ENCODE measurements at regions of chr4 and their contacts with region 1.

Region 1: GRCh38 chr4:102815981-102816380 is 11.4 kb downstream of the UBE2D3 start:
- DNase-seq: no peak
- H3K4me3 ChIP-seq: no peak overlapping the region
- H3K27ac ChIP-seq: no peak overlapping the region
- H3K4me1 ChIP-seq: peaks cover 76 to 100% (median 100%) of the 10 kb centered on the region in 6 donors
- H3K27me3 ChIP-seq: no peaks in the 10 kb centered on the region
- CTCF ChIP-seq: no peak
- POLR2A ChIP-seq: no peak

Region 2: DNA sequence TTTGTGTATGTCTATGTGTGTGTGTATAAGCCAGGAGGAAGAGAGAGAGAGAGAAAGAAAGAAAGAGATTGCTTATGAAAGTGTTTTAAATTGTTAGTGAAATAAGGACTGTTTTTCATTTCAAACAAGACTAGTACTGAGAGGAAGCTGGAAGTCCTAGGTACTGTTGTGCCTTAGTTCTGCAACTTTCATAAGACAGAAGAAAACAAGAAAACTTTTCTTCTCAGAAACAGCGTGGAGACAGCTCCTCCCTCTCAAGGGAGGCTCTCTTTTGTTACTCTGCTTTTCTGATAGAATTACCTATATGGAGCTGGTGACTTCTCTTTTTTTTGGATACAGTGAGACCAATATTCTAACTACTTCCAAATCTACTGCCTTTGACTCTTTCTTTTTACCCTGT is 963.0 kb before region 1 on chr4:
- intact Hi-C with region 1: no loop called
- DNase-seq: no peak
- H3K4me3 ChIP-seq: no peak overlapping the region
- H3K27ac ChIP-seq: peak overlapping the region in 6 of 8 donors; percentile 8 to 77 (median 46)
- H3K4me1 ChIP-seq: peaks cover 5 to 81% (median 14%) of the 10 kb centered on the region in 6 donors
- H3K27me3 ChIP-seq: no peaks in the 10 kb centered on the region
- CTCF ChIP-seq: no peak
- POLR2A ChIP-seq: no peak

Region 3: DNA sequence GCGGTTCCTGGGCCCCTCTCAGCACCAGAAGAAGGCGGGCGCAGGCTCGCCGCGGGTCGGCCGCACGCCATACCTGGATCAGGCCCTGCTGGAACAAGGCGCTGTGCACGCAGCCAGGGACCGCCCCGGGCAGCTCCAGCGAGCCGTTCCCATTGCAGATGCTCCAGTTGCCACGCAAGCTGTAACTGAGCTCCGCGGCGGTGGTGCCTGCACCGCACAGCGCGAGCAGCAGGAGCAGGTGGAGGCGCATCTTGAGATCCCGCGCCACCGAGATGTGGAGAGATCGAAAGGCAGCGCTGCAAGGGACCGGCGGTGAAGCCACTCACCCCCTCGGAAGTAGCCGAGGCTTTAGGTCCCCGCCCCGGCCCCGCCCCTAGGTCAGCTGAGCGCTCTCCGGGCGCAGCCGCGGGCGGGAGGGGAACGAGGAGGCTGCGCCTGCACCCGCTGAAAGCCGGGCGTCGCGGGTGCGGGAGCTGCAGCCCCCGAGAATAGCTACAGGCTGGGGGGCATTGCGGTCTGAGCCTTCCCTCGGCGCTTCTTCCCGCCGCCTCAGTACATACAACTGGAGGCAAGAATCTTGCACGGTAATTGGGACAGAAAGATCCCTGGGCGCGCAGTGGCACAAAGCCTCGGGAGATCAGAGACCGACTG is 55.2 kb before region 1 on chr4 and contains the start of gene MANBA:
- intact Hi-C with region 1: loop called (anchors 10 kb)
- DNase-seq: peak; percentile 99
- H3K4me3 ChIP-seq: peak within 1 kb of the TSS; percentile 88 to 98 (median 93)
- H3K27ac ChIP-seq: peak within 1 kb of the TSS; percentile 91 to 99 (median 96)
- H3K4me1 ChIP-seq: peaks cover 7 to 55% (median 32%) of the 10 kb centered on the region in 6 donors
- H3K27me3 ChIP-seq: no peaks in the 10 kb centered on the region
- CTCF ChIP-seq: peak in 2 of 11 experiments; percentile 10 to 35
- POLR2A ChIP-seq: peak in 2 of 3 donors; percentile 37 to 70
- total RNA-seq, gene MANBA: 42.9 to 112 (median 57.7) TPM

Measured in spleen (tissue), 13 donors.